CD4-positive, alpha-beta T cell (primary cell): ENCODE measurements at regions of chr6 and their contacts with region 1.

Region 1: DNA sequence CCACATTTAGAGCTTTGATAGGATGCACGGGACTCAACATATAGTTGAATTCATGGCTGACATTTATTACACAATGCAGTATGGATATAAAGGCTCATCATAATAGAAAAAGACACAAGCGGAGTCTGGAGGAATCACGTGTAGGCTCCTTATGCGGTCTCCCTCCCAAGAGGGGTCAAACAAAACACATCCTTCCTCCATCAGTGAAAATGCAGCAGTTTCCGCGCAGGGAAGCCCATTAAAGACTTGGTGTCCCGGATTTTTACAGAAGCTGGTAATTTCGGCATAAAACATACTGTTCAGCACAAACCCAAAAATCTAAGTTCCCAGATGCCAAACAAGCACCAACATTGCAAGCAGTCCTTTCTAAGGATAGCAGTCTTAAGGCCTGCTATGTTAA is 1.1 kb downstream of the USP45 start:
- DNase-seq: no peak
- ATAC-seq: no peak
- H3K4me3 ChIP-seq: peak overlapping the region; percentile 78
- H3K4me3 Mint-ChIP-seq: peak overlapping the region; percentile 97
- H3K27ac ChIP-seq: no peak overlapping the region
- H3K27ac Mint-ChIP-seq: peak overlapping the region; percentile 72
- H3K4me1 ChIP-seq: peaks cover 8% of the 10 kb centered on the region
- H3K4me1 Mint-ChIP-seq: peaks cover 32% of the 10 kb centered on the region
- H3K27me3 ChIP-seq: no peaks in the 10 kb centered on the region
- H3K27me3 Mint-ChIP-seq: no peaks in the 10 kb centered on the region
- CTCF ChIP-seq: no peak

Region 2: DNA sequence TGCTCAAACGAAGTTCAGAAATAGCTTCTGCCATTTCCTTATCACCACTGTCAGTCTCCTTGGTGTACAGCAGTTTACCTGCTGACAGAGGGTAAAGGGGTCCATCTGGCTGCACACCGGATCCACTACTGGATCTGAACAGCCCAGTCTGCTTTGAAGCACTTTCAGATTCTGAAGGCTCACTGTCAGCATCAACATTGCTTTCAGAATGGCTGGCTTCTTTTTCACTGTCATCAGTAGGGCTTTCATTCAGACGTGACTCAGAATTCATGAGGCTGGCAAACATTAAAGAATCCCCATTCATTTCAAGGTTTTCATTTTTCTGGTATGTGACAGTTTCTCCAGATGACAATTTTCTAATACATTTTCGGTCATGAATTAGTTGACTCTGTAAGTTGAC is 68.0 kb before region 1 on chr6:
- CTCF ChIA-PET with region 1: no interaction called
- POLR2A ChIA-PET with region 1: no interaction called
- intact Hi-C with region 1: no loop called
- DNase-seq: no peak
- ATAC-seq: no peak
- H3K4me3 ChIP-seq: no peak overlapping the region
- H3K4me3 Mint-ChIP-seq: no peak overlapping the region
- H3K27ac ChIP-seq: no peak overlapping the region
- H3K27ac Mint-ChIP-seq: no peak overlapping the region
- H3K4me1 ChIP-seq: no peaks in the 10 kb centered on the region
- H3K4me1 Mint-ChIP-seq: no peaks in the 10 kb centered on the region
- H3K27me3 ChIP-seq: no peaks in the 10 kb centered on the region
- H3K27me3 Mint-ChIP-seq: no peaks in the 10 kb centered on the region
- CTCF ChIP-seq: no peak

Region 3: DNA sequence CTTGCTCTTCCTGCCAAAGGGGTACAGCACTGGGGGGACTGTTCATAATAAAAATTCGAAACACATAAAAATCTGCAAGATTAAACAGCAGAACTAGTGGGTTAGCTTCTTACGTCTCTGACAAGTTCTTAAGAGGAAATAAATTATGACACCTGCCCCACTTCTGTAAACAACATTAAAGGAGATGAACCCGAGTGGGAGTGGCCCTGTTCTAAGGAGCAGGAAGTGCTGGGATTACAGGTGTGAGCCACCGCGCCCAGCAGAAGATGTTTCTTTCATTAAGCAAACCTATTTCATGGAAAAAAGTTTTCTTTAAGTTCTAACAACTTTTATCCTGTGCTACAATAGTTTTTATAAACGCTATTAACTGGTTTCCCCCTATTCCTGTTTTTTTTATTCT is 23.5 kb before region 1 on chr6:
- CTCF ChIA-PET with region 1: no interaction called
- POLR2A ChIA-PET with region 1: no interaction called
- intact Hi-C with region 1: no loop called
- DNase-seq: peak in 5 of 14 experiments; percentile 4 to 63 (median 29)
- ATAC-seq: peak; percentile 61
- H3K4me3 ChIP-seq: no peak overlapping the region
- H3K4me3 Mint-ChIP-seq: no peak overlapping the region
- H3K27ac ChIP-seq: no peak overlapping the region
- H3K27ac Mint-ChIP-seq: peak overlapping the region; percentile 27
- H3K4me1 ChIP-seq: peaks cover 6% of the 10 kb centered on the region
- H3K4me1 Mint-ChIP-seq: peaks cover 13% of the 10 kb centered on the region
- H3K27me3 ChIP-seq: no peaks in the 10 kb centered on the region
- H3K27me3 Mint-ChIP-seq: no peaks in the 10 kb centered on the region
- CTCF ChIP-seq: no peak

Region 4: GRCh38 chr6:99568103-99568933 is 54.2 kb after region 1 on chr6 and contains the start of gene CCNC:
- CTCF ChIA-PET with region 1: interaction called, 5 read pairs
- POLR2A ChIA-PET with region 1: interaction called, 30 read pairs
- intact Hi-C with region 1: loop called (anchors 2 kb)
- DNase-seq: peak; percentile 78 to 94 (median 88)
- ATAC-seq: peak; percentile 90
- H3K4me3 ChIP-seq: peak within 1 kb of the TSS; percentile 88
- H3K4me3 Mint-ChIP-seq: peak within 1 kb of the TSS; percentile 97
- H3K27ac ChIP-seq: peak within 1 kb of the TSS in 1 of 2 donors; percentile 57
- H3K27ac Mint-ChIP-seq: peak within 1 kb of the TSS; percentile 91
- H3K4me1 ChIP-seq: peaks cover 9% of the 10 kb centered on the region
- H3K4me1 Mint-ChIP-seq: peaks cover 47% of the 10 kb centered on the region
- H3K27me3 ChIP-seq: no peaks in the 10 kb centered on the region
- H3K27me3 Mint-ChIP-seq: no peaks in the 10 kb centered on the region
- CTCF ChIP-seq: no peak
- total RNA-seq, gene CCNC: 40.5 to 42.6 TPM